H1 (cell line): ENCODE measurements at regions of chr14 and their contacts with region 1.

Region 1: DNA sequence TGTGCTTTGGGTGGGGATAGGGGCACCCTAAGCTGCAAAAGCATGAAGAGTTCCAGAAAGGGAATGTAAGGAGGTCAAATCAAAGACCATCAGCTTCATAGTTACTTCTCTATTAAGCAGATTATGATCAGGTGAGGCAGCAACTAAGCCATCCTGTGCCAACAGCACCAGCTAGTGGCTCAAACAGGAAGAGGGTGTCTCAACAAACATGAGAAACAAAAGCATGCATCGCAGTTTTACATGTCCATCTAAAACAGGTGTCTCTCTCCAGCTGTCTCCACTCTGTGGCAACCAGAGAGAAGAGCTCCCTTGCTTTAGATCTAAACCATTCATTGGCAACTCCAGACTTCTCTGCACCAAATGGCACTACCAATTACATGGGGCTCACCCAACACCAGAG is 52.9 kb downstream of the ACTN1 start:
- DNase-seq: no peak
- H3K4me3 ChIP-seq: no peak overlapping the region
- H3K27ac ChIP-seq: no peak overlapping the region
- H3K4me1 ChIP-seq: peaks cover 0 to 13% (median 9%) of the 10 kb centered on the region in 4 experiments; a peak in 5 of 7 replicates
- H3K27me3 ChIP-seq: no peaks in the 10 kb centered on the region
- CTCF ChIP-seq: peak; percentile 36 to 81 (median 53)
- EP300 ChIP-seq: no peak
- POLR2A ChIP-seq: no peak
- RAD21 ChIP-seq: peak; percentile 52 to 63

Region 2: GRCh38 chr14:68939893-68940613 is 13.8 kb after region 1 on chr14:
- CTCF ChIA-PET with region 1: interaction called, 291 read pairs
- POLR2A ChIA-PET with region 1: interaction called, 8 read pairs
- DNase-seq: no peak
- H3K4me3 ChIP-seq: no peak overlapping the region
- H3K27ac ChIP-seq: no peak overlapping the region
- H3K4me1 ChIP-seq: peaks cover 2 to 40% (median 24%) of the 10 kb centered on the region in 4 experiments
- H3K27me3 ChIP-seq: no peaks in the 10 kb centered on the region
- CTCF ChIP-seq: no peak
- EP300 ChIP-seq: no peak
- POLR2A ChIP-seq: no peak
- RAD21 ChIP-seq: no peak

Region 3: DNA sequence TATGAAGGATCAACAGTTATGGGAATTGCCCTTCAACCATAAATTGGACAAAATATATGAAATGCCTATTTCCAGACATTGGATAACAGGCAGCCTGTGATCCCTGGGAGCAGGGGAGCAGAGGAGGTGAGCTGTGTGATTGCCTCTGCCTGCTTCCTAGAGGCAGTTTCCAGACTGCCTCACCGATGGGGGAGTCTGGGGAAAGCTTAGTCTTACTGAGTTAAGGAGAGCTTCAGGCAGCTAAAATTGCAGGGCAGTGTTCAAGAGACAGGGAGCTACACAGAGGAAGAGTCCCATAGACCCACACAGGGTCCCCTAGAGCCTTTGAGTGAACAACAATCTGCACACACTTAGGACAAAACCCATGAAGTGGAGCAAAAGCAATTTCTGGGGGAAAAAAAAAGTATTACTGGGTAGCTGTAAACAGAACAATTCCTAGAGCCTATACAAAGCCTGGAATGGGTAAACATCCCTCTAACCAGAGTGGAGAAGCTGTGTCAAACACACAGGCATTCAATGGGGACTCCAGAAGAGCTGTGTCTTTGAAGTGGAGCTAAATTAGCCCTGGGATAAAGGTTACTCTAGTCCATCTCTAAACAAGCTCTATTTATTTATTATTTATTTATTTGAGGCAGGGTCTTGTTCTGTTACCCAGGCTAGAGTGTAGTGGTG is 101.1 kb after region 1 on chr14:
- CTCF ChIA-PET with region 1: interaction called, 15 read pairs
- POLR2A ChIA-PET with region 1: no interaction called
- DNase-seq: no peak
- H3K4me3 ChIP-seq: no peak overlapping the region
- H3K27ac ChIP-seq: no peak overlapping the region
- H3K4me1 ChIP-seq: no peaks in the 10 kb centered on the region
- H3K27me3 ChIP-seq: no peaks in the 10 kb centered on the region
- CTCF ChIP-seq: no peak
- EP300 ChIP-seq: no peak
- POLR2A ChIP-seq: no peak
- RAD21 ChIP-seq: no peak

Region 4: GRCh38 chr14:69090187-69090789 is 164.1 kb after region 1 on chr14:
- CTCF ChIA-PET with region 1: interaction called, 10 read pairs
- POLR2A ChIA-PET with region 1: no interaction called
- DNase-seq: no peak
- H3K4me3 ChIP-seq: no peak overlapping the region
- H3K27ac ChIP-seq: no peak overlapping the region
- H3K4me1 ChIP-seq: peaks cover 3 to 11% (median 5%) of the 10 kb centered on the region in 4 experiments; a peak in 5 of 7 replicates
- H3K27me3 ChIP-seq: no peaks in the 10 kb centered on the region
- CTCF ChIP-seq: peak; percentile 23 to 73 (median 71)
- EP300 ChIP-seq: no peak
- POLR2A ChIP-seq: no peak
- RAD21 ChIP-seq: peak; percentile 74 to 78

Region 5: GRCh38 chr14:69107407-69108003 is 181.3 kb after region 1 on chr14:
- CTCF ChIA-PET with region 1: interaction called, 16 read pairs
- POLR2A ChIA-PET with region 1: no interaction called
- DNase-seq: no peak
- H3K4me3 ChIP-seq: no peak overlapping the region
- H3K27ac ChIP-seq: no peak overlapping the region
- H3K4me1 ChIP-seq: no peaks in the 10 kb centered on the region
- H3K27me3 ChIP-seq: no peaks in the 10 kb centered on the region
- CTCF ChIP-seq: peak in 2 of 3 experiments; percentile 83 to 91; a peak in 3 of 4 replicates
- EP300 ChIP-seq: no peak
- POLR2A ChIP-seq: no peak
- RAD21 ChIP-seq: peak; percentile 96